ENCODE measurements at regions of chr15 and their contacts with region 1.

Region 1: GRCh38 chr15:81939604-81940440 is 106.0 kb downstream of the MEX3B start:
- DNase-seq: peak; percentile 69
- H3K4me3 Mint-ChIP-seq: no peak overlapping the region
- H3K27ac Mint-ChIP-seq: no peak overlapping the region
- H3K4me1 Mint-ChIP-seq: peaks cover 10% of the 10 kb centered on the region
- H3K27me3 Mint-ChIP-seq: no peaks in the 10 kb centered on the region
- CTCF ChIP-seq: peak; percentile 79

Region 2: GRCh38 chr15:81929557-81929956 is 10.3 kb before region 1 on chr15:
- CTCF ChIA-PET with region 1: interaction called, 11 read pairs
- POLR2A ChIA-PET with region 1: no interaction called
- intact Hi-C with region 1: no loop called
- DNase-seq: no peak
- H3K4me3 Mint-ChIP-seq: no peak overlapping the region
- H3K27ac Mint-ChIP-seq: no peak overlapping the region
- H3K4me1 Mint-ChIP-seq: no peaks in the 10 kb centered on the region
- H3K27me3 Mint-ChIP-seq: no peaks in the 10 kb centered on the region
- CTCF ChIP-seq: no peak